ENCODE measurements at regions of chr12 and their contacts with region 1.

Region 1: DNA sequence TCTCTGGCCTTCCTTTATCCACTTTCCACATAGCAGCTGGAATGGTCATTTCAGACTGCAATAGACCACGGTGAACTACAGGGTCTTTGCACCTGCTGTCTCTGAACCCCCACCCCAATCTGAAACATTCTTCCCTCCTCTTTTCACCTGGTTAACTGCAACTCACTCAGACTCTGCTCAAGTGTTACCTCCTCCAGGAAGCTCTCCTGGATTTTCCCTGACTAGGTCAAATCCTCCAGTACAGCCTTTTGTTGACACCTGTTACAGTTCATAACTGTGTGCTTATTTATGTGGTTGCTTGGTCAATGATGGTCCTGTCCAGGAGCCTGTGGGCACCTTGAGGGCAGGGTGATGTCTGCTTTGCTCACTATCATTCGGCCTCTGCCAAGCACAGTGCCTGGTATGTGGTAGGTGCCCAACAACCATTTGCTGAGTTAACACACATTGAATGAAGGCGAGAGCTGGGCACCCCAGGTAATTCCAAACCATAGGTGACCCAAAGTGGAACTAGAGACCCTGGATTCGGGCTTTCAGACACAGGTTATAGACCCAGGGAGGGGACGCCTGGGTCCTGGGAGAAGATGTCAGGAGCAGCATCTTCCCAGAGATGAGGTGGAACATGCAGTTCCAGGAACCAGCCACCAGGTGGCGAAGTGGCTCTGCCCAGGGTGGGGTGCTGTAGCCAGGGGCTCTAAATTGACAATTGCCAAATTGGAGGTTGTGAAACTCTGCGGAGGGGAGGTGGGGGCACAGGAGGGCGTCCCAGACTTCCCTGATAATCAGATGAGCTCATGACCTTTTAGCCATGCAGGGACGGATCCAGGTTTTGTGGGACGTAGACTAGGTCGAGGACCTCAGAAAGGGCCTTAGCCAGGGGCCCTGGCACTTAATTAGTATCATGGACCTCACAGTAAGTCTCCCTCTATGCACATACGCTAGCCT is 28.1 kb downstream of the TRPV4 start:
- DNase-seq: peak; percentile 69
- H3K4me3 Mint-ChIP-seq: no peak overlapping the region
- H3K27ac Mint-ChIP-seq: no peak overlapping the region
- H3K4me1 Mint-ChIP-seq: no peaks in the 10 kb centered on the region
- H3K27me3 Mint-ChIP-seq: no peaks in the 10 kb centered on the region

Region 2: GRCh38 chr12:109786799-109787198 is 18.3 kb before region 1 on chr12:
- CTCF ChIA-PET with region 1: no interaction called
- POLR2A ChIA-PET with region 1: no interaction called
- DNase-seq: no peak
- H3K4me3 Mint-ChIP-seq: no peak overlapping the region
- H3K27ac Mint-ChIP-seq: no peak overlapping the region
- H3K4me1 Mint-ChIP-seq: no peaks in the 10 kb centered on the region
- H3K27me3 Mint-ChIP-seq: peaks cover 2% of the 10 kb centered on the region

Region 3: GRCh38 chr12:109828236-109828550 is 23.1 kb after region 1 on chr12:
- CTCF ChIA-PET with region 1: interaction called, 10 read pairs
- POLR2A ChIA-PET with region 1: no interaction called
- DNase-seq: no peak
- H3K4me3 Mint-ChIP-seq: no peak overlapping the region
- H3K27ac Mint-ChIP-seq: no peak overlapping the region
- H3K4me1 Mint-ChIP-seq: no peaks in the 10 kb centered on the region
- H3K27me3 Mint-ChIP-seq: peaks cover 14% of the 10 kb centered on the region

Measured in activated CD4-positive, alpha-beta T cell treated with anti-CD3 and anti-CD28 coated beads, Interleukin-2, amount 10 ng/mL, durations not matched to agents 7 days and 5 days (primary cell).